A673 (cell line): ENCODE measurements at regions of chr6 and their contacts with region 1.

Region 1: GRCh38 chr6:21680611-21681010 is 87.1 kb downstream of the SOX4 start:
- DNase-seq: no peak
- H3K4me3 ChIP-seq: no peak overlapping the region
- H3K27ac ChIP-seq: no peak overlapping the region
- H3K4me1 ChIP-seq: no peaks in the 10 kb centered on the region
- H3K27me3 ChIP-seq: no peaks in the 10 kb centered on the region
- CTCF ChIP-seq: no peak

Region 2: GRCh38 chr6:19690325-19691075 is 1990.1 kb before region 1 on chr6:
- CTCF ChIA-PET with region 1: no interaction called
- POLR2A ChIA-PET with region 1: interaction called, 12 read pairs
- intact Hi-C with region 1: no loop called
- DNase-seq: no peak
- H3K4me3 ChIP-seq: no peak overlapping the region
- H3K27ac ChIP-seq: no peak overlapping the region
- H3K4me1 ChIP-seq: no peaks in the 10 kb centered on the region
- H3K27me3 ChIP-seq: peaks cover 17% of the 10 kb centered on the region
- CTCF ChIP-seq: no peak

Region 3: GRCh38 chr6:21321076-21321475 is 359.5 kb before region 1 on chr6:
- CTCF ChIA-PET with region 1: no interaction called
- POLR2A ChIA-PET with region 1: no interaction called
- intact Hi-C with region 1: no loop called
- DNase-seq: no peak
- H3K4me3 ChIP-seq: no peak overlapping the region
- H3K27ac ChIP-seq: no peak overlapping the region
- H3K4me1 ChIP-seq: no peaks in the 10 kb centered on the region
- H3K27me3 ChIP-seq: no peaks in the 10 kb centered on the region
- CTCF ChIP-seq: no peak

Region 4: DNA sequence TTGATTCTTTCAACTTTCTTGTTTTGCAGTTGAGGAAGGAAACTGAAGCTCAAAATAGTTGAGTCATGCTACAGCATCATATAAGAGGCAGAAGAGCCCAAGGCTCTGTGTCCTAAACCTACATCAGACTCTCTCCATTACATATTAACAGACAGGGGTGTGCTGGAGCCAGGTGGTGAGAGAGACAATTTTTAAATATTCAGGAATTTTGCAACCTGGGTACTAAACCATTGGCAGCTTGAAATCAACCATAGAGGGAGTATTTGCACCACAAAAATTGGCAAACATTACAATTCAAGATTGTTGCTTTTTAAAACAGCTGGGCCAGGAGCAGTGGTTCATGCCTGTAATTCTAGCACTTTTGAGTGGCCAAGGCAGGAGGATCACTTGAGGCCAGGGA is 152.9 kb before region 1 on chr6:
- CTCF ChIA-PET with region 1: no interaction called
- POLR2A ChIA-PET with region 1: no interaction called
- intact Hi-C with region 1: no loop called
- DNase-seq: no peak
- H3K4me3 ChIP-seq: no peak overlapping the region
- H3K27ac ChIP-seq: no peak overlapping the region
- H3K4me1 ChIP-seq: no peaks in the 10 kb centered on the region
- H3K27me3 ChIP-seq: no peaks in the 10 kb centered on the region
- CTCF ChIP-seq: 0 out of 2 replicates have a peak, but pooled peaks have one; percentile 10